ENCODE measurements at regions of chr4 and their contacts with region 1.

Region 1: DNA sequence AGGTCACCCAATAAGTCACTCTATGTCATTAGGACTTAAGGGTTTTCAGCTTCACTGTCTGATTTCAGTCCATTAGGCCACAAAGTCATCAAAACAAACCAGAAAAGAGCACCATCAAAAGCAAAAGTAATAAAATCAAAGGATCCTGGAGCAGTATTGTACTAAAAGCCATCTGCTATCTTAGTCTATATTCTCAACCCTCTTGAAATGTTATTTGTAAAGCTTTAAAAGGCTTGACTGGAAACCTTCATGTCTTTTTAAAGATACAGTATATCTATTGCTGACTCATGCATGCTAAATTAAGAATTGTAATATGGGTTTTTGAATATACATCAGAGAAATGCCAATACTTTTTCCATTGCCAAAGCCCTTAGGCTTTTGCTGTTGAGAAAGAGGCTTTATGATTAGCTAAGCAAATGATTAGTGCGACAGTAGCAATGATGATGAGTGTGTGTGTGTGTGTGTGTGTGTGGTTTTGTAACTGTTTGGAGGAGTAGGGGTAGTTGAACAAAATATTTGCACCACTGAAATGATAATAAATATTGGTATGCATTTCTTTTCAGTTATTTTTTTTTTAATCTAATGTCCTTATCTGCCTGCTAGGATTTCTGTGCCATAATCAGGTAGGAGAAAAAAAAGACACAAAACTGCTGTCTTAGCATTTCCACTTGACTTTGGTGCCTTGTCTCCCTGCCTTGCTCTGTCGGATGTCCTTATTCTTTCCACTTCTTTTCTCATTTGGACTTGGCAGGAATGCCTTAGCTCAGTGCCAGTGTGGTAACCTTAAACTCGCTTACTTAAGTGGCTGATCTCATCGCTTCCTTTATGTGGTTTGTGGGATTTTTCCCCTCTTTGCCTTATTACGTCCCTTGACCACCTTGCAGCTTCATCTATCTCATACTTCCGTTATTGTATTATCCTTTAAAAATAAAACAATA is 119.7 kb downstream of the PCDH7 start:
- DNase-seq: no peak
- ATAC-seq: peak in 1 of 4 donors; percentile 59
- H3K4me3 ChIP-seq: no peak overlapping the region
- H3K27ac ChIP-seq: peak overlapping the region in 6 of 12 donors; percentile 4 to 53 (median 28)
- H3K4me1 ChIP-seq: peaks cover 0 to 25% (median 3%) of the 10 kb centered on the region in 12 donors
- H3K27me3 ChIP-seq: no peaks in the 10 kb centered on the region
- CTCF ChIP-seq: no peak
- POLR2A ChIP-seq: no peak

Region 2: DNA sequence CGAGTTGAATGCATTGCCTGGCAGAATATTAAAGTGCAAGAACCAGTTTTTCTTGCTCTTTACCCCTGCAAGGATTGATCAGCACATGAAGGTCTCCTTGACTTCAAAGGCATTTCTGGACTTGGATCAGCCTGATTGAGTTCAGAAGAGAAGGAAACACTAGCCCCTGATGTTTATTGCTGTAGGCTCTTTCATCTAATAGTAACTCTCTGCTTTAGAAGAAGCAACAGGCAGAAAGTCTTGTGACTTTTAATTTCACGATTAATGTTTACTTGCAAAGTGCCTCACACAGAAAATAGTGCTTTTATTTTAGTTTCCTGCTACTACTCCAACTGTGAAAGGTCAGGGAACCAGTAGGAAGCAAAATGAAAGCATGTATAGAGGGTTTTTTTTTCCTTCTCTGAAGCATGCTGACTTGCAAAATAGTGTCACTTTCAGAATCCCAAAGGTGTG is 50.6 kb before region 1 on chr4:
- intact Hi-C with region 1: no loop called
- DNase-seq: no peak
- ATAC-seq: no peak
- H3K4me3 ChIP-seq: no peak overlapping the region
- H3K27ac ChIP-seq: no peak overlapping the region
- H3K4me1 ChIP-seq: peaks cover 0 to 13% (median 0%) of the 10 kb centered on the region in 12 donors
- H3K27me3 ChIP-seq: no peaks in the 10 kb centered on the region
- CTCF ChIP-seq: no peak
- POLR2A ChIP-seq: no peak

Region 3: GRCh38 chr4:30870513-30870912 is 30.7 kb after region 1 on chr4:
- intact Hi-C with region 1: no loop called
- DNase-seq: no peak
- ATAC-seq: peak in 2 of 4 donors; percentile 67 to 74
- H3K4me3 ChIP-seq: no peak overlapping the region
- H3K27ac ChIP-seq: no peak overlapping the region
- H3K4me1 ChIP-seq: peaks cover 0 to 18% (median 0%) of the 10 kb centered on the region in 12 donors
- H3K27me3 ChIP-seq: no peaks in the 10 kb centered on the region
- CTCF ChIP-seq: no peak
- POLR2A ChIP-seq: no peak

Region 4: GRCh38 chr4:30939069-30939468 is 99.2 kb after region 1 on chr4:
- intact Hi-C with region 1: loop called in 1 of 10 experiments (anchors 10 kb)
- DNase-seq: no peak
- ATAC-seq: peak in 2 of 4 donors; percentile 30 to 38
- H3K4me3 ChIP-seq: no peak overlapping the region
- H3K27ac ChIP-seq: peak overlapping the region in 1 of 12 donors; percentile 11
- H3K4me1 ChIP-seq: peaks cover 0 to 13% (median 0%) of the 10 kb centered on the region in 12 donors
- H3K27me3 ChIP-seq: no peaks in the 10 kb centered on the region
- CTCF ChIP-seq: no peak
- POLR2A ChIP-seq: no peak

Measured in heart left ventricle (tissue), 16 donors.